Activated CD4-positive, alpha-beta memory T cell treated with anti-CD3 and anti-CD28 coated beads for 36 hours (primary cell): ENCODE measurements at regions of chr18 and their contacts with region 1.

Region 1: GRCh38 chr18:78984941-78985784 is 5.5 kb downstream of the SALL3 start:
- DNase-seq: peak; percentile 31
- H3K4me3 Mint-ChIP-seq: no peak overlapping the region
- H3K27ac Mint-ChIP-seq: no peak overlapping the region
- H3K4me1 Mint-ChIP-seq: peaks cover 6% of the 10 kb centered on the region
- H3K27me3 Mint-ChIP-seq: peaks cover 57% of the 10 kb centered on the region

Region 2: DNA sequence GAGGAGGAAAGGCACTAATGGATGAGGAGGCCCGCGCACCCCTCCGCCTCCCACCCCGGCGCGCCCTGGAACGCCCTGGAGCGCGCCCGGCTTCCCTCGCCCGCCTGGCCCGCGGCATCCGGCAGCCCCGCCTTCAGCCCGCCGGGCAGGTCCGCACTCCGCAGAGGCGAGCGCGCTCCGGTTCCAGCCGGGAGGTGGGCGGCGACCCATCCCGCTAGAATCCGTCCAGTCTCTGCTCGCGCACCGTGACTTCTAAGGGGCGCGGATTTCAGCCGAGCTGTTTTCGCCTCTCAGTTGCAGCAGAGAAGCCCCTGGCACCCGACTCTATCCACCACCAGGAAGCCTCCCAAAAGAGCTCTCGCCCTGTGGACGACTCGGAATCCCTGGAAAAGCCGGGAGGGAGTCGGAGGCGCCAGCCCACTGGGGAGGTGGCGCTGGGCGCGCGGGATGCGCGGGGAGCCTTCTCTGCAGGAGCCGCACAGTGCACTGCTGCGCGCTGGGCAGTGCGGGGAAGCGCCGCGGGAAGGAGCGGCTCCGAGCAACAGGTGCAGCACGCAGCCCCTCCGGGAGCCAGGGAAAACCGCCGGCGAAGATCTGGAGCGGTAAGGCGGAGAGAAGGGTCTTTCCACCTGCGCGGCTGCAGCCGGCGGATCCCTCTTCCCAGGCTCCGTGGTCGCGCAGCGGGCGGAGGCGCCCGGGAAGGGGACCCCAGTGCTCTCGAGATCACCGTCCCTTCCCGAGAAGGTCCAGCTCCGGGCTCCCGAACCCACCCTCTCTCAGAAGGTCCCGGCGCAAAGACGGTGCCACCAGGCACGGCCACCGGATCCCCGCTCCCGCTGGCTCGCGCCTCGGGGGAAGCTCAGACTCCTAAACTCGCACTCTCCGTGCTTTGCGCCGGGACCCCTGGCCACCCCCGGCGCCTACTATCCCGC is 1735.3 kb before region 1 on chr18 and contains the start of gene GALR1:
- CTCF ChIA-PET with region 1: no interaction called
- POLR2A ChIA-PET with region 1: no interaction called
- intact Hi-C with region 1: loop called (anchors 10 kb)
- DNase-seq: no peak
- H3K4me3 Mint-ChIP-seq: peak within 1 kb of the TSS; percentile 58
- H3K27ac Mint-ChIP-seq: no peak within 1 kb of the TSS
- H3K4me1 Mint-ChIP-seq: peaks cover 13% of the 10 kb centered on the region
- H3K27me3 Mint-ChIP-seq: peaks cover 52% of the 10 kb centered on the region
- total RNA-seq, gene GALR1: not detected

Region 3: DNA sequence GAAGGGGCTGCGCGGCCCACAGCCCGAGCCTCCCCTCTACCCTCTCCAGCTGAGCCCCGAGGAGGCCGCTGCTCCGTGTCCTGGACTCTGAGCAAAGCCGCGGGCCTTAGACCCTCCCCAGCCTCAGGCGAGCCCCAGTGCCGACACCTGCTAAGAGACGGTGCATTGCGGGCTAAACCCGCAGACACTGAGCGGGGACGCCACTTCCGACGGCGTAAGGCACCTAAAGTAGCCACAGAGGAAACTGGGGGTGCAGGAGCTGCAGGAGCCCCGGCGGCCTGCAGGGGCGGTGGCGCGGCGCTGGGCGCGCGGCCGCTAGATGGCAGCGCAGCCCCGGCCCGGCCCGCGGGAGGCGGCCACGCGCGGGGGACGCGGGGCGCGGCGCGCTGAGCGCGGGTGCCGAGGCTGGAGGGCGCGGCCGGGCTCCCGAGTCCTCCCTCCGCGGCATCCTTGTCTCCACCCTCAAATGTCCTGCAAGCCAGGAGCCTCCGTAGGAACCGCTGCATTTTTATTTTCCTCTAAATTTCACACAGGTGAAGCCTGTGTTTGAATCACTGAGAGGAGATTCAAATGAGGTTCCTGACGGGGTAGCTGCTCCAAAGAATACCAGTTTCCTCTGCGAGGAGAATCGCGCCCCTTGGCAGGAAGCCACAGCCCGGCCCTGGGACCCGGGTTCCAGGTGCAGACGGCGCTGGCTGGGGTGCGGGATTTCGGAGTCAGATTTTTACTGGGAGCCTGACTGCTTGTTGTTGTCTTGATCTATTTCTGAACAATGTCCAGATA is 1085.0 kb before region 1 on chr18:
- CTCF ChIA-PET with region 1: no interaction called
- POLR2A ChIA-PET with region 1: no interaction called
- intact Hi-C with region 1: loop called (anchors 5 kb)
- DNase-seq: peak; percentile 68
- H3K4me3 Mint-ChIP-seq: peak overlapping the region; percentile 43
- H3K27ac Mint-ChIP-seq: no peak overlapping the region
- H3K4me1 Mint-ChIP-seq: peaks cover 6% of the 10 kb centered on the region
- H3K27me3 Mint-ChIP-seq: peaks cover 24% of the 10 kb centered on the region

Region 4: DNA sequence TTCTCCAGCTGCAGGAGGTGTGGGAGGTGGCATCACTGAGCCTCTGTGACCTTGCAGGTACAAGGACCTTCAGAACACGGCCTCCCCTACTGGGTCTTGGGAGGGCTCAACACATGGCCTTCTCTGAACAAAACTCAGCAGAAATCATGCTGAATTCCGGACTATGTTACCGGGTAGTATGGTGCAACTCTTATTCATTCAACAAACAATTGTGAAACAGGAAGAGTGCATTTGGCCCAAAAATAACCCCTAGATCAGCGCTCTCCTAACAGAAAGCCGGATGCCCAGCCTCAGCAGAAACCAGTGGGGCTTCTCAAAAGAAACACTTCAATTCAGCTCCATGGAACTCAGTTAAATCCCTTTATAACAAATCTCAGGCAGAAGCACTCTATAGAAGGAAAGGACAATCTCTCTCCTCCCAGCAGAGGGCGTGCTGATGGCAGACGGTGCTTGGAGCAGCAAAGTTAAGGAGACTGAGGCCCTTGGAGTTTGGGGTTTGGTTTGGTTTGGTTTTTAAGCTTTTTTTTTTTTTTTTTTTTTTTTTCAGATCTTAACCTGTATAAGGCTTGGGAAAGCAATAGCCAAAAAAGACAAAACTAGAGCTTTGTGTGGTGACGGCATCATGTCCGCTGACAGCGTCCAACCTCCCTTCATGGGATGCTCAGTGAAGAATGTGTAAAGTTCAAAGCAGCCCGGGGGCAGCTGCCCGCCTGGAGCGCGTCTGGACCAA is 109.7 kb before region 1 on chr18:
- CTCF ChIA-PET with region 1: interaction called, 4 read pairs
- POLR2A ChIA-PET with region 1: no interaction called
- intact Hi-C with region 1: loop called (anchors 5 kb)
- DNase-seq: peak; percentile 43
- H3K4me3 Mint-ChIP-seq: no peak overlapping the region
- H3K27ac Mint-ChIP-seq: no peak overlapping the region
- H3K4me1 Mint-ChIP-seq: no peaks in the 10 kb centered on the region
- H3K27me3 Mint-ChIP-seq: peaks cover 20% of the 10 kb centered on the region

Region 5: DNA sequence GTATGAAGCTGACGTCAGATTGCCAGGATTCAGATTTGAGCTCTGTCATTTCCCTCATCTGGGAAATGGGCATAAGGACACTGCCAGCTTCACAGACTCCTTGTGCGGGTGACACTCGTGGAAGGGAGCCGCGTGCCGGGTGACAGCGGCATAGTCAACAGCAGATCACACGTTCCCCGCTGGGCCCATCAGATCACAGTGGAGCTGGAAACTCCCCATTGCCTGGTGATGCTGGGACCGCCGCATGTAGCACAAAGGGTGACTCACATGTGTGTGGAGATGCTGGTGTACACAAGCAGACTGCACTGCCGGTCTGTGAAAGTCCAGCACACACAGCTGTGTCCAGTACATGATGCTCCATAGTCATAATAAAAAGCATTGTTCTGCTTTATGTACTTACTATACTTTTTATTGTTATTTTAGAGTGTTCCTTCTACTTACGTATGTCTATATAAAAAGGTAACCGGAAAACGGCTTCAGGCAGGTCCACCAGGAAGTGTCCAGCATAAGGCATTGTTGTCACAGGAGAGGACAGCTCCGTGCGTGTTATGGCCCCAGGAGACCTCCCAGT is 26.2 kb after region 1 on chr18:
- CTCF ChIA-PET with region 1: no interaction called
- POLR2A ChIA-PET with region 1: no interaction called
- intact Hi-C with region 1: no loop called
- DNase-seq: no peak
- H3K4me3 Mint-ChIP-seq: no peak overlapping the region
- H3K27ac Mint-ChIP-seq: no peak overlapping the region
- H3K4me1 Mint-ChIP-seq: no peaks in the 10 kb centered on the region
- H3K27me3 Mint-ChIP-seq: peaks cover 3% of the 10 kb centered on the region

Region 6: GRCh38 chr18:79022603-79023002 is 37.4 kb after region 1 on chr18:
- CTCF ChIA-PET with region 1: no interaction called
- POLR2A ChIA-PET with region 1: no interaction called
- intact Hi-C with region 1: no loop called
- DNase-seq: no peak
- H3K4me3 Mint-ChIP-seq: no peak overlapping the region
- H3K27ac Mint-ChIP-seq: no peak overlapping the region
- H3K4me1 Mint-ChIP-seq: no peaks in the 10 kb centered on the region
- H3K27me3 Mint-ChIP-seq: peaks cover 13% of the 10 kb centered on the region

Region 7: GRCh38 chr18:79246348-79247108 is 261.4 kb after region 1 on chr18:
- CTCF ChIA-PET with region 1: no interaction called
- POLR2A ChIA-PET with region 1: no interaction called
- intact Hi-C with region 1: loop called (anchors 1 kb)
- DNase-seq: peak; percentile 89
- H3K4me3 Mint-ChIP-seq: peak overlapping the region; percentile 65
- H3K27ac Mint-ChIP-seq: peak overlapping the region; percentile 60
- H3K4me1 Mint-ChIP-seq: peaks cover 12% of the 10 kb centered on the region
- H3K27me3 Mint-ChIP-seq: no peaks in the 10 kb centered on the region